GM18951 (cell line): ENCODE measurements at regions of chr4 and their contacts with region 1.

Region 1: DNA sequence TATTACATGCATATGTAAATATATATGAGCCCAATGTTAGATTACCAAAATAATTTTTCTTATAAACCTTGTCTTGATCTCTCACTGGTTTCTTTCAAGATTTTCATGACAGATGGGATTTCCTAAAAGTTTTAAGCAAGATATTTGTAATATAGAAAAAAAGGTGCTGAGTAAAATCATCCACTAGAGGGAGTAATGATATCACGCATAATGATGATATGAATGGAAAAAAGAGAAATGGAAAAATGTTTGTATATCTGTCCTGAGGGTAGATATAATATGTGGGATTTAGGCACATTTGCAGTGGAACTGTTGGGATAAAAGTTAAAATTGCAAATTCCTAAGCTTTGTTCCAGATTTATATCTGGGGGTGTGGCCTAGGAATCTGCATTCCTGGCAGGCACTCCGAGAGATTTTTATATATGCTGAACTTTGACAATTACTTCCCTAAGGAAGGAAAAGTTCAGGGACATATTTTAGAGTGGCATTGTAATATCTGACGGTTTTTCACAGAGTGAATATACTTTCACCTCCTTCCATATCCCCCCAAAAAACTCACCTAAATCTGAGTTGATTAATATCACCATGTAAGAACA is 60.5 kb downstream of the TMA16 start:
- POLR2A ChIP-seq: no peak

Region 2: GRCh38 chr4:163681208-163681821 is 126.3 kb after region 1 on chr4:
- in situ Hi-C with region 1: loop called (anchors 10 kb)
- POLR2A ChIP-seq: no peak

Region 3: GRCh38 chr4:163755013-163755412 is 200.0 kb after region 1 on chr4:
- in situ Hi-C with region 1: loop called (anchors 5 kb)
- POLR2A ChIP-seq: no peak